Dorsolateral prefrontal cortex (tissue), 120 donors: ENCODE measurements at regions of chr13 and their contacts with region 1.

Region 1: DNA sequence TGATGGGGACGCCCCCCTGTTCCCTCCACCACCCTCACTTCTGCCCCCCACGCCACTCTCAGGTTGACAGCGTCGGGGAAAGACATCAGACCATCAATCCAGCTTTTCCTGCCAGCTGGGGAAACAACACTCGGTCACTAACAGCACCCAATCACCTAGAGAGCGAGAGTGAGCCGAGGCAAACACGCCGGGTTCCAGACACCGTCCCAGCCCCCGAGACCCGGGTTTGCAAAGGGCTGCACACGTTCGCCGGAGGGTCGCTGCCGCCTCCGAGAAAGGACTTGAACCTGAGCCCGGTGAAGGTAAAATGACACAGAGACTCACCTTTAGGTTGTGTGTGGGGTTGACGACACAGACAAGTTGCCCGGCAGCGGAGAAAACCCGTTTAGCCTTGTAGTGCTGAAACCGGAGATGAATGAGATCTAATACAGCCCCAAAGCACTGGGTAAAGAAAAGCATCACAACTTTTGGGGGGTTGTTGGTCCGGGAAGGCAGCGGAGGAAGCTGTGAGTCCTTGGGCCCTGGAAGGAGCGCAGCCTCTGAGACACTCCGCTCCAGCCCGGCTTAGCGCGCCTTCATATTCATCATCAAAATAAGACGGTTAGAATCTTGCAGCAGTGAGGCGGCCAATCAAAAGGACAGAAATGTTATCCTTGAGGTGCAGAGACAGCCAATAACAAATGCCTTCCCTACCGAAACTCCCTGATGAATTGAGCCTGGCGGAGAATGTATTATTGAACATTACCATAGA is at the start of gene SIAH3:
- DNase-seq: peak in 7 of 10 donors; percentile 11 to 73 (median 56)
- H3K4me3 ChIP-seq: peak within 1 kb of the TSS; percentile 18 to 76 (median 62)
- H3K27ac ChIP-seq: peak within 1 kb of the TSS in 23 of 59 donors; percentile 8 to 71 (median 30)
- H3K27me3 ChIP-seq: peaks cover 0 to 19% (median 0%) of the 10 kb centered on the region in 45 donors
- CTCF ChIP-seq: no peak
- total RNA-seq, gene SIAH3: 0.81 to 6.0 (median 3.0) TPM

Region 2: GRCh38 chr13:45895881-45896280 is 44.5 kb after region 1 on chr13:
- intact Hi-C with region 1: no loop called
- DNase-seq: no peak
- H3K4me3 ChIP-seq: no peak overlapping the region
- H3K27ac ChIP-seq: no peak overlapping the region
- H3K27me3 ChIP-seq: peaks cover 0 to 6% (median 0%) of the 10 kb centered on the region in 45 donors
- CTCF ChIP-seq: no peak

Region 3: GRCh38 chr13:45932676-45933075 is 81.3 kb after region 1 on chr13:
- intact Hi-C with region 1: loop called in 1 of 2 experiments (anchors 10 kb)
- DNase-seq: no peak
- H3K4me3 ChIP-seq: no peak overlapping the region
- H3K27ac ChIP-seq: no peak overlapping the region
- H3K27me3 ChIP-seq: peaks cover 0 to 2% (median 0%) of the 10 kb centered on the region in 45 donors
- CTCF ChIP-seq: no peak